Panc1 (cell line): ENCODE measurements at regions of chr4 and their contacts with region 1.

Region 1: DNA sequence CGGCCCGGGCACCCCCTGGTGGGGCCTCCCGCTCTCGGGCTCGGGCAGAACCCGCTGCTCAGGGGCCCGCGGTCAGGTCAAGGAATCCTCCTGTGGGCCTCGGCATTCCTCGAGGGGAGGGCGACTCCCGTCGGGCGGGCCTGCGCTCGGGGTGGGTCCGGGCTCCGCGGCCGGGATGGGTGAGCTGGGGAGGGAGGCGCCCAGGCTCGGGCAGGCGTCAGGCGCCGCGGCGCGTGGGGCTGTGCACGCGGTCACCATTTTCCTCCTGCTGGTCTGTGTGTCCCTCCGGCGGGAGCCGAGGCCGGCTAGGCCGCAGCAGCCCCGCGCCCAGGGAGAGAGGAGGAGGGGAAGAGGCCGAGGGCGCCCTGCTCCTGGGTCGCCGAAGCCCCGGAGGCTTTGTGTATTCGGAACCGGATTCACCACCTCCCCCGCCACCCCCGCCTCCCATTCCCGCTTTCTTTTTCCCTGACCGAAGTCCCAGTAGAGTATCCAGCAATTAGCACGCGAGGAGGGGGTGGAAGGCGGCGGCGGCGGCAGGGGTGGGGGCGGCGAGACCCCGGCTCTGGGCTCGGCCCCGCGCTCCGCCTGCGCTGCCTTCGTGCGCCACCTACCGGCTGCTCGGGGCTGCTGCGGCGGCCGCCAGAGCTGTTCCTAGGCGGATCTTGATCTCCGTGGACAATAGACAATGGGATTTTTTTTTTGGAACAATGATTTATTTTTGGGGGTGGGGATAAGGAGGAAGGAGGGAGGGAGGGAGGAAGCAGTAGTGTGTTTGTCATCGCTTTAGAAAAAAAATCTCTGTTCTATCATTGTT is 99.0 kb upstream of the MAML3 start:
- DNase-seq: no peak
- ATAC-seq: peak; percentile 87
- H3K4me3 ChIP-seq: peak overlapping the region; percentile 46 to 55
- H3K27ac ChIP-seq: peak overlapping the region; percentile 71
- H3K4me1 ChIP-seq: peaks cover 16% of the 10 kb centered on the region
- H3K27me3 ChIP-seq: no peaks in the 10 kb centered on the region
- CTCF ChIP-seq: peak; percentile 96

Region 2: DNA sequence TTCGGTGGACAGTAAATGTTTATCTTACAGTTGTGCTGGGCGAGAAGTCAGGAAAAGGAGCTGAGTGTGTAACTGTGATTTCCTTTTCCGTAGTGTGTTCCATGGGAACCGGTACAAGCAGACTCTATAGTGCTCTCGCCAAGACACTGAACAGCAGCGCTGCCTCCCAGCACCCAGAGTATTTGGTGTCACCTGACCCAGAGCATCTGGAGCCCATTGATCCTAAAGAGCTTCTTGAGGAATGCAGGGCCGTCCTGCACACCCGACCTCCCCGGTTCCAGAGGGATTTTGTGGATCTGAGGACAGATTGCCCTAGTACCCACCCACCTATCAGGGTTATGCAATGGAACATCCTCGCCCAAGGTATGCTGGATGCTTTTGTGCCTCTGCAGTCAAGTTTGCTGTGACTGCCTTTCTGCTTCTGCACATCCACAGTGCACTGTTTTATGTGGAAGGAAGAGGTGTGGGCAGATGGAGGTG is 1209.9 kb before region 1 on chr4:
- CTCF ChIA-PET with region 1: no interaction called
- POLR2A ChIA-PET with region 1: no interaction called
- in situ Hi-C with region 1: no loop called
- intact Hi-C with region 1: no loop called
- DNase-seq: no peak
- ATAC-seq: no peak
- H3K4me3 ChIP-seq: no peak overlapping the region
- H3K27ac ChIP-seq: no peak overlapping the region
- H3K4me1 ChIP-seq: no peaks in the 10 kb centered on the region; the same call in 1 of the 2 replicates
- H3K27me3 ChIP-seq: no peaks in the 10 kb centered on the region
- CTCF ChIP-seq: no peak

Region 3: GRCh38 chr4:139734875-139735380 is 518.0 kb before region 1 on chr4:
- CTCF ChIA-PET with region 1: no interaction called
- POLR2A ChIA-PET with region 1: interaction called, 15 read pairs
- in situ Hi-C with region 1: no loop called
- intact Hi-C with region 1: no loop called
- DNase-seq: no peak
- ATAC-seq: peak; percentile 97
- H3K4me3 ChIP-seq: peak overlapping the region; percentile 31 to 48
- H3K27ac ChIP-seq: peak overlapping the region; percentile 69
- H3K4me1 ChIP-seq: peaks cover 3% of the 10 kb centered on the region
- H3K27me3 ChIP-seq: no peaks in the 10 kb centered on the region
- CTCF ChIP-seq: peak; percentile 83

Region 4: DNA sequence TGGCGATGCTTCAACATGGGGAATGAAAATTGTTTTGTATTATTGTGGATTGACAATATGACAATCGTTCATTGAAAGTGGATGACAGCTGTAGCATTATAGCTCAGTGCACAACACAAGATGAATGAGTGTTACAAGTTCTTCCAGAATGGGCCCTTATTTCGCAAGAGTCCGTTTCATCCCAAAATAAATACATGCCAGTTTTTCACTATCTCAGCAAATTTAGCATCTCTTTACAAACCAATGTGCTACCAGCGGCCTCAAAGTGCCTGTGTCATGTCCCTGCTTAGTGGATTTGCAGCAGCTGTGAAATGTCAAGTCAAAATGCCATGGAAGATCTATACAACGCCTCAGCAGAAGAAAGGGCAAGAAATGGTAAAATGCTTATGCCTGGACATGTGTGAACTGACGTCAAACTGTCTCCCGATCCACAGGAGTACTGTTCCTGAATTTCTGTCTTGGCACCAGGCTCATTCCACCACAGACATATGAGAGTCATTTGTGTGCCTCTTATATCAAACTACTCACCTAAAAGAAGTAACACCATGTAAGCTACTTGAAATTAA is 208.5 kb before region 1 on chr4:
- CTCF ChIA-PET with region 1: no interaction called
- POLR2A ChIA-PET with region 1: interaction called, 12 read pairs
- in situ Hi-C with region 1: no loop called
- intact Hi-C with region 1: no loop called
- DNase-seq: no peak
- ATAC-seq: no peak
- H3K4me3 ChIP-seq: no peak overlapping the region
- H3K27ac ChIP-seq: peak overlapping the region; percentile 15; the same call in 1 of the 2 replicates
- H3K4me1 ChIP-seq: peaks cover 30% of the 10 kb centered on the region
- H3K27me3 ChIP-seq: no peaks in the 10 kb centered on the region
- CTCF ChIP-seq: no peak

Region 5: DNA sequence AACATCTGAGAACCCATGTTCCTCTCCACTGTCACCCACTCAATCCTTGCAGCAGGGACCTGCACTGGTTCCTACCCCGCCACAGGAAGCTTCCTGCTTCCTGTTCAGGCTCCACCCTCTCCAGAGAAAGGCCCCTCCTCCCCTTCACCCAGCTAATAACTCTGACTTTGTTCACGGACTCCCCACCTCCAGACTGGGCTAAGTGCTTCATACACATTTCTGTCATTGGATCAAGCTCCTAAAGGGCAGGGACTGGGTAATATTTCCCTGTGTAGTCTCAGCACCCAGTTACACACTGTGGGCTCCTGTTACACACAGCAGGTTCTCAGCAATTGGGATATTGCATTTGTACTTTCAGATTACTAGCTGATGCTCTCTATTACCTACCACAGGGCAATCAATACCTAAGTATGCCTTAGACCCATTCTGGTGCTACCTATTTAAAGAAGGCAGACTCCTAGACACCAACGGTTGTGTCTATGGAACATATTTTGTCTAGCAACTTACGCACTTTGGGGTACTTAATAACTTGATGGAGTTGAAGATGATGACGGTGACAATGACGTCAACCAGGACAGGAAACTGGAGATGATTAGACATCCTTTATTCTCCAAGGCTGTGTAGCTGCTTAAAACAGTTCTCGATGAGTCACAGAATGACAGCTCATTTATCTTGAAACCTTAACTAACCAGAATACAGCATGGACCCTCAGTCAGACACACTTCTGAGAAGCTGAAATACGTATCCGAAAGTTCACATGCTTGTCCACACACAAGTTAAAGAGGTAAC is 157.1 kb before region 1 on chr4:
- CTCF ChIA-PET with region 1: no interaction called
- POLR2A ChIA-PET with region 1: no interaction called
- in situ Hi-C with region 1: no loop called
- intact Hi-C with region 1: loop called (anchors 10 kb)
- DNase-seq: no peak
- ATAC-seq: peak; percentile 72
- H3K4me3 ChIP-seq: peak overlapping the region; percentile 18 to 51
- H3K27ac ChIP-seq: peak overlapping the region; percentile 96
- H3K4me1 ChIP-seq: peaks cover 61% of the 10 kb centered on the region
- H3K27me3 ChIP-seq: no peaks in the 10 kb centered on the region
- CTCF ChIP-seq: no peak

Region 6: DNA sequence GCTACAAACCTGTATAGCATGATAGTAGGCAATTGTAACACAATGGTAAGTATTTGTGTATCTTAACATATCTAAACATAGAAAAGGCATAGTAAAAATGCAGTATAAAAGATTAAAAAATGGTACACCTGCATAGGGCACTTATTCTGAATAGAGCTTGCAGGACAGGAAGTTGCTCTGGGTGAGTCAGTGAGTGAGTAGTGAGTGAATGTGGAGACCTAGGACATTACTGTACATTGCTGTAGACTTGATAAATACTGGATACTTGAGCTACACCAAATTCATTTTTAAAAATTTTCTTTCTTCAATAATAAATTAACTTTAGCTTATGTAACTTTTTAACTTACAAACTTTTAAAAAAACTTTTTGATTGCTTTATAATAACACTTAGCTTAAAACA is 30.8 kb before region 1 on chr4:
- CTCF ChIA-PET with region 1: no interaction called
- POLR2A ChIA-PET with region 1: no interaction called
- in situ Hi-C with region 1: no loop called
- intact Hi-C with region 1: no loop called
- DNase-seq: no peak
- ATAC-seq: peak; percentile 70; the same call in 1 of the 2 replicates
- H3K4me3 ChIP-seq: no peak overlapping the region
- H3K27ac ChIP-seq: no peak overlapping the region
- H3K4me1 ChIP-seq: no peaks in the 10 kb centered on the region
- H3K27me3 ChIP-seq: no peaks in the 10 kb centered on the region
- CTCF ChIP-seq: no peak

Region 7: DNA sequence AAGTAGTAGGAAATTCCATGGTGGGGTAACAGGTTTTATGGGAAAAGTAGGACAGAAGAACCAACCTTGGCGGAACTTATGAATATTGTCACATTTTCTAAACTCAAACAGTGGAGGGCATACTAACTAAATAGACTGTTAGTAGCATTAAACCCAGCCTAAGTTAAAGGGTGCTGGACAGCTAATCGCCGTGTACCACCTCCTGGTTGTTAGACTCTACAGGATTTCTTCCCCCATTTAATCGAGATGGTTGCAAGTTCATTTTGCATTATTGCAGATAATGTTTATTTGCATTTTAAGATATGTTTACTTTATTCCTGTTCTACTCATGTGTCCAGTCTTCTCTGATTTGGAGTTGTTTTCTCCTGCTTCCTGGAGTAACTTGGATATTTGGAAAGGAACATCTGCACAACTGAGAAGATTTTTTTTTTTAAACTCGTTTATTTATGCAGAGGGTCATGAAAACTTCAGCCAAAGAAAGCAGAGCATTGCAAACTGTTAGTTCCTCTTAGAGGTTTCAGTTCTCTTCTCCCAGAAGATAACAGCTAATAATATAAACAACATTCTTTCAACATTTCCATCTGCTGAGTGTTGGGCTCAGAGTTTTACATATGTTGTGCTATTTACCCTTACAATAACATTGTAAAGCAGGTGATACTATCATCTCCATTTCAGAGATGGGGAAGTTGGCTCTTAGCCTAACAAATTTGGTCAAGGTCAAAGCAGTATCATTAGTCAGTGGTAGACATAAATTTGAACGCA is 554.7 kb after region 1 on chr4:
- CTCF ChIA-PET with region 1: no interaction called
- POLR2A ChIA-PET with region 1: no interaction called
- in situ Hi-C with region 1: no loop called
- intact Hi-C with region 1: no loop called
- DNase-seq: no peak
- ATAC-seq: no peak
- H3K4me3 ChIP-seq: no peak overlapping the region
- H3K27ac ChIP-seq: no peak overlapping the region
- H3K4me1 ChIP-seq: no peaks in the 10 kb centered on the region
- H3K27me3 ChIP-seq: no peaks in the 10 kb centered on the region
- CTCF ChIP-seq: no peak